Endothelial cell of umbilical vein (primary cell): ENCODE measurements at regions of chr13 and their contacts with region 1.

Region 1: GRCh38 chr13:68030152-68030809 is 800.1 kb upstream of the PCDH9 start:
- DNase-seq: no peak
- H3K4me3 ChIP-seq: no peak overlapping the region
- H3K27ac ChIP-seq: no peak overlapping the region
- H3K4me1 ChIP-seq: no peaks in the 10 kb centered on the region
- H3K27me3 ChIP-seq: no peaks in the 10 kb centered on the region
- CTCF ChIP-seq: no peak
- POLR2A ChIP-seq: no peak

Region 2: DNA sequence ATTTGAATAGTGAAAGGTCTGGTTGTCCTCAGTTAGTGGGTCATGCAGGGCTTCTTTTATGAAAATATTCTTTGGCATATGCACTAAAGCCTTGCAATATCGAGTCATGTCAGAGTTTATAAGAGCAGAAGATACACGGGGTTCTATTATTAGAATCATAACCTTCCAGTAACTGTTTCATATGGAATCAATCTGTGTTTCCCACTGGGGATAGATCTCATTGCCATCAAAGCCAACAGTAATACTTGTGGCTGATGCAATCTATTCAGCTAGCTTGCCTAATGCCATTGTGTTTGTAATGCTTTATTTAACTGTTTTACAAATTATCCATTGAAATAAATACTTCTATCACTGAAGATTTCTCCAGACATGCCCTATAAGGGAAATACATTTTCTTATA is 53.2 kb before region 1 on chr13:
- CTCF ChIA-PET with region 1: no interaction called
- POLR2A ChIA-PET with region 1: no interaction called
- dilution Hi-C with region 1: no loop called
- intact Hi-C with region 1: loop called (anchors 10 kb)
- DNase-seq: no peak
- H3K4me3 ChIP-seq: no peak overlapping the region
- H3K27ac ChIP-seq: no peak overlapping the region
- H3K4me1 ChIP-seq: no peaks in the 10 kb centered on the region
- H3K27me3 ChIP-seq: no peaks in the 10 kb centered on the region
- CTCF ChIP-seq: no peak
- POLR2A ChIP-seq: no peak